CD4-positive, alpha-beta memory T cell (primary cell): ENCODE measurements at regions of chr9 and their contacts with region 1.

Region 1: DNA sequence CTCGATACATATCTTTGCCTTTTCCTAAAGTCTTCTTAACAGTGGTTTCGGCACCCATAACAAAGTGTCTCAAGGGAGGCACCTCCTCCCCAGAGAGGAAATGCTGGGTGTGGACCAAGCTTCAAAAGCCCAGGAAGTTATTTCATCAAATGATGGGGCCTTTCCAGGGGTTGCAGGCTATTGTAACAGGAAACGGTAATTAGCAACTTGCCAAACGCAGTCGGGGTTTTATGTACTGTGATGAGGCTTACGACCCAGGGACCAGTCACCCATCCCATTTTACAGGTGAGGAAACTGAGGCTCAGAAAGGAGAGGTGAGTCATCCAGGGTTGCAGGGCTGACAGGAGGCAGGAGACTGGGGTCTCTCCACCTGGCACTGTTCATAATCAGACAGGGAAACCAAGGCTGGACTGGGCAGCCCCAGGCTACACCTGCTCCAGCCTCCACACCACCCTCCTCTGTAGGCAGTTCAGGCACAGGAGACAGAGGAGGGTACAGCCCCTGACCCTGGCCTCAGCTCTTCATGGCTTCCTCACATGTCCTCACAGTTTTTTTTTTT is 30.0 kb upstream of the SUSD3 start:
- DNase-seq: peak; percentile 84 to 94 (median 89)
- H3K4me3 ChIP-seq: peak overlapping the region; percentile 52 to 55
- H3K4me3 Mint-ChIP-seq: peak overlapping the region; percentile 82 to 90 (median 86)
- H3K27ac ChIP-seq: peak overlapping the region; percentile 91
- H3K27ac Mint-ChIP-seq: peak overlapping the region; percentile 94 to 99 (median 96)
- H3K4me1 ChIP-seq: peaks cover 95% of the 10 kb centered on the region
- H3K4me1 Mint-ChIP-seq: peaks cover 43 to 95% (median 78%) of the 10 kb centered on the region in 4 donors
- H3K27me3 ChIP-seq: no peaks in the 10 kb centered on the region
- H3K27me3 Mint-ChIP-seq: no peaks in the 10 kb centered on the region

Region 2: DNA sequence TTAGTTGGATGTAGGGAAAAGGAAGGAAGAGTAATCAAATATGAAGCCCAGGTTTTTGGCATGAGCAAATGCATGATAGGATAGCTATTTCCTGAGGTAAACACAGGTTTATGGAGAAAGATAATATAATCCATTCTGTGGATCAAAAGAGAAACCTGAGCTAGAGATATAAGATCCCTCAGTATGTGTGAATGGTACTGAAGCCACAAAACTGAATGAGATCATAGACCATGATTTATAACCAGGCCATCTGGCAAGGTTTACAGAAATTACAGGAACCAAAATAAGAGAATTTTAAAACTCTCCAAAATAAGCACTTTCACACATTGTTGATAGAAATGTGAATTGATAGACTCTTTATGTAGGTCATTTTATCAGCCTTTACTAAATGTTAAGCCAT is 464.0 kb before region 1 on chr9:
- CTCF ChIA-PET with region 1: no interaction called
- POLR2A ChIA-PET with region 1: no interaction called
- intact Hi-C with region 1: no loop called
- DNase-seq: no peak
- H3K4me3 ChIP-seq: no peak overlapping the region
- H3K4me3 Mint-ChIP-seq: no peak overlapping the region
- H3K27ac ChIP-seq: no peak overlapping the region
- H3K27ac Mint-ChIP-seq: no peak overlapping the region
- H3K4me1 ChIP-seq: no peaks in the 10 kb centered on the region
- H3K4me1 Mint-ChIP-seq: no peaks in the 10 kb centered on the region
- H3K27me3 ChIP-seq: no peaks in the 10 kb centered on the region
- H3K27me3 Mint-ChIP-seq: no peaks in the 10 kb centered on the region

Region 3: DNA sequence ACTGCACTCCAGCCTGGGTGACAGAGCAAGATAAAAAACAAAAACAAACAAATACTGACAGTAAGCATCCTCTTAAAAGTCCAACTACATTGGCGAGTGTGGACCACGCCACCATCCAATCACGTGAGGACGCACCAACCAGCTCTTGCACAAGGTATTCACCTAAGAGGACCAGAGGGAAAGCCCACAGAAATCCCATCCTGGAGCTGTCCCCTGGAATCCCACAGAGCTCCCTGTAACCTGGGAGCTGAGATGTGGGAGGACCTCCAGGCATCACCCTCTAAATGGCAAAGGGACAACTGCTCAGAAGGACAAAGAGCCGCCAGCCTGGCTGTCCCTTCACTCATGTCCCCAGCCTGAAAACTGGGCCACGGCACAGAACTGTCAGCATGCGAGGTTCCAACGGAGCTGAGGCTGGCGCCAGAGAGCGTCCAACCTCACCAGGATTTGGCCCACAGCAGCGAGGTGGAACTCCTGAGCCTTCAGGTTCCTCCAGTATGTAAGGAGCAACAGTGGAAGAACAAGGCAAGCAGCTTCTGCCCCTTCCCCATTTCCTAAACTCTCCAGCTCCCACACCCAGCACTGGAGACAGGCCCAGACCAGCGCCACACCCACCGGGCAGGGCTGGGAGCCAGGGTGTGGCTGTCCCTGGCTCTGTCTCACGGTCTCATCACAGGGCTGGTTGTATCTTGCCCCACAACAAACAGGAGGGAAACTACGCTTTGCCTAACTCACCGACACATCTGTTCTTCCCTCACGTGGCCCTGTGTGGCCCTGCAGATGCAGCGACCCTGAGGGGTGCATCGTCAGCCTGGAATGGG is 373.8 kb before region 1 on chr9:
- CTCF ChIA-PET with region 1: no interaction called
- POLR2A ChIA-PET with region 1: no interaction called
- intact Hi-C with region 1: no loop called
- DNase-seq: no peak
- H3K4me3 ChIP-seq: no peak overlapping the region
- H3K4me3 Mint-ChIP-seq: no peak overlapping the region
- H3K27ac ChIP-seq: no peak overlapping the region
- H3K27ac Mint-ChIP-seq: peak overlapping the region in 1 of 7 donors; percentile 70
- H3K4me1 ChIP-seq: no peaks in the 10 kb centered on the region
- H3K4me1 Mint-ChIP-seq: peaks cover 0 to 1% (median under 1%) of the 10 kb centered on the region in 4 donors
- H3K27me3 ChIP-seq: no peaks in the 10 kb centered on the region
- H3K27me3 Mint-ChIP-seq: no peaks in the 10 kb centered on the region

Region 4: GRCh38 chr9:93013856-93014582 is 14.5 kb before region 1 on chr9:
- CTCF ChIA-PET with region 1: interaction called, 13 read pairs
- POLR2A ChIA-PET with region 1: interaction called, 322 read pairs
- intact Hi-C with region 1: no loop called
- DNase-seq: no peak
- H3K4me3 ChIP-seq: no peak overlapping the region
- H3K4me3 Mint-ChIP-seq: no peak overlapping the region
- H3K27ac ChIP-seq: no peak overlapping the region
- H3K27ac Mint-ChIP-seq: peak overlapping the region; percentile 6 to 89 (median 78)
- H3K4me1 ChIP-seq: no peaks in the 10 kb centered on the region
- H3K4me1 Mint-ChIP-seq: peaks cover 7 to 21% (median 14%) of the 10 kb centered on the region in 4 donors
- H3K27me3 ChIP-seq: no peaks in the 10 kb centered on the region
- H3K27me3 Mint-ChIP-seq: no peaks in the 10 kb centered on the region

Region 5: DNA sequence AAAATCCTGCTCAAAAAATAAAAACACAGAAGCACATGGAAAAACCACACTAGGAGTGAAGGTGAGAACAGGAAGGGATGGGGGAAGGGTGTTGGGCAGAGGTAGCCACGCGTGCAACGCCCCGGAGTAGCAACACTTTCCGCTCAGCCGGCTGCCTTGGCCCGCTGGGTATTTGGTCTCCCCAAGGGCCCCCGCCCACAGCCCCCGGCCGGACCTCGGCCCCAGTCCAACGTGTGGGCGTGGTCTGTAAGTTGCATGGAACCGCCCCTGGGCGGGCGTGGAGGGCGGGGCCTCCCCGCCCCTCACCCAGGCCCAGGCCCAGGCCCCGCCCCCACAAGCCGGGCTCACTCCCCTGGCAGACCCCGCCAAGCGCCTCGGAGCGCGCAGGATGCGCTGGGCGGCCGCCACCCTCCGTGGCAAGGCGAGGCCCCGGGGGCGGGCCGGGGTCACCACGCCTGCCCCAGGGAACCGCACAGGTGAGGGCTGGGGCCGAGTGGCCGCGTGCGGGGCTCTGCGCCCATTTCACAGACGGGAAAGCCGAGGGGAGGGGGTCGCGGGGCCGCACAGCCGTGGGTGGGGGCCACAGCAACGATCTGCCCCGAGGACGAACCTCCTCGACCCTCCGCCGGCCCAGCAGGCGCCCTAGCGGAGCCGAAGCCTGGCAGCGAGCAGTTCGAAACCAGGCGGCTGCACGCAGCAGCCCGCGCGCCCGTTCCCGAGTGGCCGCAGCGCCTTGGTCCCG is 30.0 kb after region 1 on chr9 and contains the start of gene SUSD3:
- CTCF ChIA-PET with region 1: interaction called, 13 read pairs
- POLR2A ChIA-PET with region 1: interaction called, 654 read pairs
- intact Hi-C with region 1: loop called (anchors 1 kb)
- DNase-seq: peak; percentile 58 to 76 (median 63)
- H3K4me3 ChIP-seq: peak within 1 kb of the TSS; percentile 86 to 92
- H3K4me3 Mint-ChIP-seq: peak within 1 kb of the TSS; percentile 94 to 95 (median 95)
- H3K27ac ChIP-seq: peak within 1 kb of the TSS; percentile 72
- H3K27ac Mint-ChIP-seq: peak within 1 kb of the TSS; percentile 96 to 100 (median 99)
- H3K4me1 ChIP-seq: peaks cover 76% of the 10 kb centered on the region
- H3K4me1 Mint-ChIP-seq: peaks cover 30 to 82% (median 58%) of the 10 kb centered on the region in 4 donors
- H3K27me3 ChIP-seq: no peaks in the 10 kb centered on the region
- H3K27me3 Mint-ChIP-seq: no peaks in the 10 kb centered on the region
- total RNA-seq, gene SUSD3: 58.3 to 63.7 TPM

Region 6: DNA sequence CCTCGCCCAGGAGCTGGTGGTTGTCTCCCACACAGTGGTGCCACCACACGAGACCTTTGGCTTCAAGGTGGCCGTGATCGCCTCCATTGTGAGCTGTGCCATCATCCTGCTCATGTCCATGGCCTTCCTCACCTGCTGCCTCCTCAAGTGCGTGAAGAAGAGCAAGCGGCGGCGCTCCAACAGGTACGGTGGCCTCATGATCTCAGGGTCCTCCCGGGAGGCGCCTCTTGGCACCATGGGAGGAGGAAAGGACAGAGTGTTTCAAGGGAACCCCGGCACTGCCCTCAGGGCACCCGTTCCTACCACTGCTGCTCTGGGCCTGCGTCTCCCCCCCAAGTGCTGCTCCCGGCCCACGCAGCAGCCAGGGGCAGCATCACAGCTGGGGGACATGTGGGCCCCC is 49.3 kb after region 1 on chr9:
- CTCF ChIA-PET with region 1: interaction called, 12 read pairs
- POLR2A ChIA-PET with region 1: interaction called, 13 read pairs
- intact Hi-C with region 1: no loop called
- DNase-seq: no peak
- H3K4me3 ChIP-seq: no peak overlapping the region
- H3K4me3 Mint-ChIP-seq: peak overlapping the region in 1 of 8 donors; percentile 16
- H3K27ac ChIP-seq: no peak overlapping the region
- H3K27ac Mint-ChIP-seq: peak overlapping the region in 3 of 7 donors; percentile 55 to 67 (median 66)
- H3K4me1 ChIP-seq: peaks cover 27% of the 10 kb centered on the region
- H3K4me1 Mint-ChIP-seq: peaks cover 18 to 68% (median 31%) of the 10 kb centered on the region in 4 donors
- H3K27me3 ChIP-seq: no peaks in the 10 kb centered on the region
- H3K27me3 Mint-ChIP-seq: no peaks in the 10 kb centered on the region

Region 7: DNA sequence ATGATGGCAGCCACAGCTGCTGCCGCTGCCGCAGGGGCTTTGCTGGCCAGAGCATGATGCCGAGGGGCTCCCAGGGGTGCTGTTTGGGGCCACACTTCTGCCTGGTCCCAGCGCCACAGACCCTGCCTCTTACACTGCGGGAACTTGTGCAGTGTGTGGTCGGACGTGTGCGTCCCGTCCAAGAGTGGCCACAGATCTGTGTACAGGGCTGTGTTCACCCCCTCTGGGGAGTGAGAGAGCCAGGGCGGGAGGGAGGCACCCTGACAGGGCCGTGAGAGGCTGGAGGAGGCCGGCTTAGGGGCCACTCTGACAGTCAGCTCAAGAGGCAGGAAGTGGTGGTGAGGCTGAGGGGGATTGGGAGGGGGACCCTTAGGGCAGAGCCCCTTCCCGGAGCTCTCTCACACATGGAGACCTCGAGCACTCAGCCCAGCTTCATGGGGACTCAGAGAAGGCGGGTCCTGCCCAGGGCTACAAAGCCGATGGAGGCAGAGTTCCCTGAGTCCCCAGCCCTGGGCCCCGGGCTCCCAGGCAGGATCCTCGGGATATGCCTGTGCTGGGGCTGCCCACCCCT is 54.4 kb after region 1 on chr9:
- CTCF ChIA-PET with region 1: interaction called, 12 read pairs
- POLR2A ChIA-PET with region 1: interaction called, 13 read pairs
- intact Hi-C with region 1: no loop called
- DNase-seq: no peak
- H3K4me3 ChIP-seq: no peak overlapping the region
- H3K4me3 Mint-ChIP-seq: peak overlapping the region in 1 of 8 donors; percentile 81
- H3K27ac ChIP-seq: peak overlapping the region; percentile 55
- H3K27ac Mint-ChIP-seq: peak overlapping the region in 5 of 7 donors; percentile 35 to 95 (median 82)
- H3K4me1 ChIP-seq: peaks cover 31% of the 10 kb centered on the region
- H3K4me1 Mint-ChIP-seq: peaks cover 15 to 42% (median 20%) of the 10 kb centered on the region in 4 donors
- H3K27me3 ChIP-seq: no peaks in the 10 kb centered on the region
- H3K27me3 Mint-ChIP-seq: no peaks in the 10 kb centered on the region